ENCODE measurements at regions of chr2 and their contacts with region 1.

Region 1: DNA sequence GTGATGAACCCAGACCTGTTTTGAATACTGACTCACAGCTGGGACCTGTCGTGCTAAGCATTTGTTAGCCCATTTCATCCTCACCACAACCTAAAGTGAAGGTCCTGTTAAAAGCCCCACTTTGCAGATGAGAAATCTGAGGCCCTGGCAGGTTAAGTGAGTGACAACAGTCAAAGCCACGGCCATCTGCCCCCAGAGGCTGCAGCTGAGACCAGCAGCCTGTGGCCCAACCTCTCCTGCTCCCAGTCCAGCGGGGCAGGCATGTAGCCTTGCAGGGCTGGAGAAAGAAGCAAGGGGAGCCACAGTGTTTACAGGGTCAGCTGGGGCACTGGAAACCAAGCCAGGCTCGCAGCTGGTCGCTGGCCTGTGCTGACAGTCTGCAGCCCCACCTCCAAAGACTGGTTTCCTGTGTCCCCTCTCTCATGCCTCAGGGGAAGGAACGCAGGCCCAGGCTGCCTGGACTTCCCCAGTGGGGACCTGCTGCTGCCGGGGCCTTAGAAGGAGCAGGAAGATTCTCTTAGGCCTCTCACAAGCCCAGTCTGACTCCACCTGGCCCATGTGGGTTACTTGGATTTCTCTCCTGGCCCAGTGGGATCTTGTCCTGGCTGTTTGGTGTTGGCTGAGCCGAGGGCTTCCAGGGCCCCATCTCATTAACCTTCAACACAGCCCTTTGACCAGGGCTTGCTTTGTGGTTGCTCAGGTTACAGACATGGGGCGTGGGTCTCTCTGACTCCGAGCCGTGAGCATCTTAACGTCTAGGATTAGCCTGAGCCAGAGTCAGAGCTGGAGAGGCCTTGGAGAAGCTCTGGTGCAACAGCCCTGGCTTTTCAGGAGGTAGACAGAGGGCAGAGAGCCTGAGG is 1.7 kb downstream of the INPP5D start:
- DNase-seq: peak; percentile 74
- ATAC-seq: peak; percentile 45
- H3K4me3 Mint-ChIP-seq: peak overlapping the region; percentile 89
- H3K27ac Mint-ChIP-seq: peak overlapping the region; percentile 97
- H3K4me1 Mint-ChIP-seq: peaks cover 44% of the 10 kb centered on the region
- H3K27me3 Mint-ChIP-seq: no peaks in the 10 kb centered on the region
- CTCF ChIP-seq: peak; percentile 63

Region 2: DNA sequence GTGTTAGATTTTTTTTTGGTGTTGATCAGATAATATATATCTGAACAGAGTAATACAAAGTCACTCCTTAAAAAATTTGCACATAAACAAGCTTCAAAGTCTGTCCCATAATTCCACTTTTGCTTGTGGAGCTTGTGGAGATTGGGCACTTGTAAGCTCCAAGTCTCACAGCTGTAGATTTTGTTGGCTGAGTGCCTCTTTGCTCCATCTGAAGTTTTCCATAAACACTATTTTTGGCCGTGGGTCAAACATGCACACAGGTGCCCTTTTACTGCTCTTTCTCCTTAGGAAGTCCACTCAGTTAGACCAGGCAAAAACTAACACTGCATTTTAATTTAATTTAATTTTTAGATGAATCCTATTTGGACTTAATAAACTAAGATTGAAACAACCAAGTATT is 281.9 kb before region 1 on chr2:
- CTCF ChIA-PET with region 1: no interaction called
- POLR2A ChIA-PET with region 1: no interaction called
- intact Hi-C with region 1: no loop called
- DNase-seq: no peak
- ATAC-seq: no peak
- H3K4me3 Mint-ChIP-seq: no peak overlapping the region
- H3K27ac Mint-ChIP-seq: no peak overlapping the region
- H3K4me1 Mint-ChIP-seq: peaks cover 10% of the 10 kb centered on the region
- H3K27me3 Mint-ChIP-seq: no peaks in the 10 kb centered on the region
- CTCF ChIP-seq: no peak

Region 3: DNA sequence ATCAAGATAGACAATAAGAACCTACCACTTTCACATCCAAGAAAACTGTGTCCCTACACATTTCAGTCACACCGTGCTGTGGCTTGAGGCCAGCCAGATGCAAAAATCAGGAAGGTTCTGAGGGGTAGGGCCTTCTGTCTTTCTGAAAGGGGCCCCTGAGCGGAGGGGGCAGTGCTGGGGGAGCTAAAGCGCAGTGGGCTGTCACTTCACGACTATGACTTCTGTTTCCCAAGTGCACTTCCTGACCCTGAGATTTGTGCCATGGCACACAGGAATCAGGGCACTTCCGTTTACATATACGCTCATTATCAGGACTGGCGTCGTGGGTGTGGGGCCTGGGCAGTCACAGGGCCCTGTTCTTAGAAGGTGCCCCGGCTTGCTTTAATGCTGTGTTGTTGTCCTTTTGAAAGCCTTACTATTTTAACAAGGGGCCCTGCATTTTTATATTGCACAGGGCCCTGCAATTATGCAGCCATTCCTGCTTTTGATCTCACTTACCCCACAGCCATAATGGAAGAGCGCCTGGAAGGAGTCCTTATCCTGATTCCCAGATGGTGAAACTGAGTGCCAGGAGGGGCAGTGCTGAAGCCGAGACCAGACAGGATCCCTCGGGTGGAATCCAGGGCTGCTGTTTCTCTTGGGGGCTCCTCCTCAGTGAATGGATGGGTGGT is 49.4 kb before region 1 on chr2:
- CTCF ChIA-PET with region 1: no interaction called
- POLR2A ChIA-PET with region 1: no interaction called
- intact Hi-C with region 1: no loop called
- DNase-seq: no peak
- ATAC-seq: no peak
- H3K4me3 Mint-ChIP-seq: no peak overlapping the region
- H3K27ac Mint-ChIP-seq: no peak overlapping the region
- H3K4me1 Mint-ChIP-seq: no peaks in the 10 kb centered on the region
- H3K27me3 Mint-ChIP-seq: no peaks in the 10 kb centered on the region
- CTCF ChIP-seq: no peak

Region 4: GRCh38 chr2:233075966-233076339 is 14.1 kb after region 1 on chr2:
- CTCF ChIA-PET with region 1: interaction called, 19 read pairs
- POLR2A ChIA-PET with region 1: interaction called, 119 read pairs
- intact Hi-C with region 1: loop called (anchors 2 kb)
- DNase-seq: peak; percentile 23
- ATAC-seq: peak; percentile 28
- H3K4me3 Mint-ChIP-seq: no peak overlapping the region
- H3K27ac Mint-ChIP-seq: no peak overlapping the region
- H3K4me1 Mint-ChIP-seq: peaks cover 40% of the 10 kb centered on the region
- H3K27me3 Mint-ChIP-seq: no peaks in the 10 kb centered on the region
- CTCF ChIP-seq: no peak

Region 5: GRCh38 chr2:233084488-233084887 is 22.7 kb after region 1 on chr2:
- CTCF ChIA-PET with region 1: interaction called, 24 read pairs
- POLR2A ChIA-PET with region 1: interaction called, 119 read pairs
- intact Hi-C with region 1: no loop called
- DNase-seq: peak; percentile 78
- ATAC-seq: peak; percentile 26
- H3K4me3 Mint-ChIP-seq: peak overlapping the region; percentile 54
- H3K27ac Mint-ChIP-seq: peak overlapping the region; percentile 85
- H3K4me1 Mint-ChIP-seq: peaks cover 80% of the 10 kb centered on the region
- H3K27me3 Mint-ChIP-seq: no peaks in the 10 kb centered on the region
- CTCF ChIP-seq: no peak

Region 6: GRCh38 chr2:233100192-233100998 is 38.6 kb after region 1 on chr2:
- CTCF ChIA-PET with region 1: interaction called, 23 read pairs
- POLR2A ChIA-PET with region 1: interaction called, 33 read pairs
- intact Hi-C with region 1: loop called (anchors 5 kb)
- DNase-seq: peak; percentile 94
- ATAC-seq: peak; percentile 87
- H3K4me3 Mint-ChIP-seq: peak overlapping the region; percentile 41
- H3K27ac Mint-ChIP-seq: peak overlapping the region; percentile 84
- H3K4me1 Mint-ChIP-seq: peaks cover 61% of the 10 kb centered on the region
- H3K27me3 Mint-ChIP-seq: no peaks in the 10 kb centered on the region
- CTCF ChIP-seq: no peak